ENCODE measurements at regions of chr18 and their contacts with region 1.

Region 1: DNA sequence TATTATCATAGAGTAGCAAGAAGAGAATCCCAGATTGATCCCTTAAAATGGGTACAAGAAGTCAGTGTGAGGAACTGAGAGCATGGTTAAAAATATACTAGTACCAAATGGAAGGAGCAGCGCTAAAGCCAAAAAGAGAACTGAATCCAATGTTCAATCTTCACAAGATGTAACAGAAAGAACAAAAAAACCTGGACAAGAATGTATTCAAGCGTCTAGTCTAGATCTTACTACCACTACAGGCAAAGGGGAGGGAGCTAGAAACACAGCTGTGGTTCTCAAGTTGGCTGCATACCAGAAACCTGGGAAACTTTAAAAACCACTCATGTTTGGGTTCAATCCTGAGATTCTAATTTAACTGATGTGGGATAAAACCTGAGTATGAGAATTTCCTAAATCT is 57.5 kb downstream of the PIAS2 start:
- H3K4me3 ChIP-seq: no peak overlapping the region
- H3K27ac ChIP-seq: no peak overlapping the region
- H3K4me1 ChIP-seq: no peaks in the 10 kb centered on the region; the same call in 1 of the 2 replicates
- CTCF ChIP-seq: no peak

Region 2: DNA sequence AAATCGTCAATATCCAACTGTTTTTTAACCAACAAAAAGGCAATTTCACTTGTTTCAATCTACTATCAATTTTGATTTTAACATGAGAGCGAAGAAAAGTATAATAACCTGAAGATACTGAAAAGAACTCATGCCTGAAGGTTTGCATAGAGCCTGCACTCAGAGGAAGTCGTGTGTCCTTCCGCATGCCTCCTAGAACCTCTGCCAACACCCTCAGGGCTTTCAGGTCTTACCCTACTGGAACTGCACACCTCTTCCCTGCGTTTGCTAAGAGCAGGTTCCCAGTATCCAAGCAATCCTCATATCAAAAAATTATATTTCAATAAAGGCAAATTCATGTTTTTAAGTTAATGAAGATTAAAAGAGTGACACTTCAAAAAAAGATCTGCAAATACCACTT is 17.3 kb before region 1 on chr18:
- CTCF ChIA-PET with region 1: interaction called, 4 read pairs
- POLR2A ChIA-PET with region 1: interaction called, 10 read pairs
- H3K4me3 ChIP-seq: no peak overlapping the region
- H3K27ac ChIP-seq: no peak overlapping the region
- H3K4me1 ChIP-seq: no peaks in the 10 kb centered on the region
- CTCF ChIP-seq: no peak

Region 3: DNA sequence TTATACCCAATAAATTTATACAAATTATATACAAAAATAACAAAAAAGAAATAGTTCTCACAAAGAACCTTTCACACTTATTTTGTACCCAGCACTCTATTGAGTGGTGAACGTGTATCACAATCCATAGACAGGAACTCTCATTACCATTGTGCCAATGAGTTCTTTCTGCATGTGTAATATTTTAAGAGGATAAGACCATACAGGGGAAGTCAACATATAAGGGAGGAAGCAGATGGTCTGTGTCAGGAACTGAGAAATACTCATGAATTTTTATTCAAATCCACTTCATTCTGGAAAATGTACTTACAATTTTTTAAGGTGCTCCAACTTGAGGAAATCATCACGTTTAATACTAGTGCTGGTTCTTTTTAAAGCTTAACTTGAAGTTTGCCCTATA is 202.6 kb after region 1 on chr18:
- CTCF ChIA-PET with region 1: no interaction called
- POLR2A ChIA-PET with region 1: no interaction called
- H3K4me3 ChIP-seq: no peak overlapping the region
- H3K27ac ChIP-seq: no peak overlapping the region
- H3K4me1 ChIP-seq: no peaks in the 10 kb centered on the region
- CTCF ChIP-seq: no peak